ENCODE measurements at regions of chr6 and their contacts with region 1.

Region 1: DNA sequence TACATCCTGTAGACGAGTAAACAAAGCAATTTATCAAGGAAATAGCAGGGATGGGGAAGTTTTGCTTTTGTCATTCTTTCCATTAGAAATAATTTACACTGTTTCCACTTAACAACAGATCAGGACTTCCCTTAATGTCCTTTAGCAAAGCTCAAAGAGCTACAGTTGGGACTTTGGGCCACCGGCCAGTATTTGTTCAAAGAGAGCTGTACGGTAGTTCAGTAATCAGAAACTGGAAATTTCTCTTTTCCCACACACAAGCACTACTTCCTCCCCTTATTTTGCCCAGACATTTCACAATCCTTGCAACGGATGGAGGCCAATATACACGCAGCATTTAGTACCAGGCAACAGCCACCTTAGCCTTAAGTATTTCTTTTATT is 12.1 kb upstream of the HINT3 start:
- DNase-seq: peak; percentile 93
- H3K4me3 Mint-ChIP-seq: no peak overlapping the region
- H3K27ac Mint-ChIP-seq: peak overlapping the region; percentile 92
- H3K4me1 Mint-ChIP-seq: peaks cover 72% of the 10 kb centered on the region
- H3K27me3 Mint-ChIP-seq: no peaks in the 10 kb centered on the region
- CTCF ChIP-seq: no peak

Region 2: GRCh38 chr6:125700581-125701353 is 243.7 kb before region 1 on chr6:
- CTCF ChIA-PET with region 1: no interaction called
- POLR2A ChIA-PET with region 1: no interaction called
- intact Hi-C with region 1: no loop called
- DNase-seq: no peak
- H3K4me3 Mint-ChIP-seq: no peak overlapping the region
- H3K27ac Mint-ChIP-seq: no peak overlapping the region
- H3K4me1 Mint-ChIP-seq: no peaks in the 10 kb centered on the region
- H3K27me3 Mint-ChIP-seq: peaks cover 50% of the 10 kb centered on the region
- CTCF ChIP-seq: no peak

Region 3: GRCh38 chr6:125913864-125914351 is 30.5 kb before region 1 on chr6:
- CTCF ChIA-PET with region 1: interaction called, 13 read pairs
- POLR2A ChIA-PET with region 1: interaction called, 305 read pairs
- intact Hi-C with region 1: no loop called
- DNase-seq: peak; percentile 97
- H3K4me3 Mint-ChIP-seq: no peak overlapping the region
- H3K27ac Mint-ChIP-seq: peak overlapping the region; percentile 94
- H3K4me1 Mint-ChIP-seq: peaks cover 46% of the 10 kb centered on the region
- H3K27me3 Mint-ChIP-seq: no peaks in the 10 kb centered on the region
- CTCF ChIP-seq: no peak

Region 4: GRCh38 chr6:125918681-125919566 is 25.5 kb before region 1 on chr6:
- CTCF ChIA-PET with region 1: interaction called, 13 read pairs
- POLR2A ChIA-PET with region 1: interaction called, 305 read pairs
- intact Hi-C with region 1: loop called (anchors 1 kb)
- DNase-seq: peak; percentile 97
- H3K4me3 Mint-ChIP-seq: peak overlapping the region; percentile 90
- H3K27ac Mint-ChIP-seq: peak overlapping the region; percentile 99
- H3K4me1 Mint-ChIP-seq: peaks cover 47% of the 10 kb centered on the region
- H3K27me3 Mint-ChIP-seq: no peaks in the 10 kb centered on the region
- CTCF ChIP-seq: no peak

Region 5: GRCh38 chr6:125923987-125924568 is 20.3 kb before region 1 on chr6:
- CTCF ChIA-PET with region 1: interaction called, 13 read pairs
- POLR2A ChIA-PET with region 1: interaction called, 305 read pairs
- intact Hi-C with region 1: loop called (anchors 1 kb)
- DNase-seq: peak; percentile 73
- H3K4me3 Mint-ChIP-seq: peak overlapping the region; percentile 34
- H3K27ac Mint-ChIP-seq: peak overlapping the region; percentile 80
- H3K4me1 Mint-ChIP-seq: peaks cover 39% of the 10 kb centered on the region
- H3K27me3 Mint-ChIP-seq: no peaks in the 10 kb centered on the region
- CTCF ChIP-seq: no peak

Region 6: GRCh38 chr6:126063512-126064146 is 119.2 kb after region 1 on chr6:
- CTCF ChIA-PET with region 1: no interaction called
- POLR2A ChIA-PET with region 1: no interaction called
- intact Hi-C with region 1: no loop called
- DNase-seq: no peak
- H3K4me3 Mint-ChIP-seq: no peak overlapping the region
- H3K27ac Mint-ChIP-seq: no peak overlapping the region
- H3K4me1 Mint-ChIP-seq: no peaks in the 10 kb centered on the region
- H3K27me3 Mint-ChIP-seq: no peaks in the 10 kb centered on the region
- CTCF ChIP-seq: no peak